ENCODE measurements at regions of chr3 and their contacts with region 1.

Region 1: GRCh38 chr3:50674349-50675178 is at the start of gene DOCK3:
- DNase-seq: peak; percentile 23 to 94 (median 59)

Region 2: DNA sequence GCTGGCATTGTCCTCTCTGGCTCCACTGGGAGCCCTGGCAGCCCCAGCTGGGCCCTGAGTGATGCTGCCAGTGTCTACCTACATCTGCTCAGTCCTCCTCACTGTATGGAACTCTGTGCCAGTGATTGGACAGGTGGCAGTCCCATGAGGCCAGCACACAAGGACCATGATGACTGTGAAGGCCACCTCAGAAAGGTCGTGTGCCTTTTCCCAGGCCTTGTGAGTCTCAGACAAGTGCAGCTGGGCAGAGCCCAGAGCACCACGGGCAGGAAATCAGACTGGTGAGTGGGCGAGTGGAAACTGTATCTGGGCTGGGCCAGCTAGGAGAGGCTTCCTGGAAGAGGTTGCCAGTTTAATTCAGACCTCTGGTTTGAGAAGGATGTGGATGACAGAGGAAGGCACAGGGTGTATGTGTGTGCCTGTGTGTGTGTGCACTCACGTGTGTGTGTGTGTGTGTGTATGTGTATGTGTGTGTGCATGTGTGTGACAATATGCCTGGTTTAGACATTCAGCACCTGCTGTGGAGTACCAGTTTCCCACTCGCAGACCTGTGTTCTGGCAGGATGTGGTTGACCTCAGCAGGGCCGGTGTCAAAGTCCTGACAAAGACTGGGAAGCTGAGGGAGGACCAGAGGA is 50.6 kb before region 1 on chr3:
- intact Hi-C with region 1: loop called (anchors 5 kb)
- DNase-seq: no peak

Region 3: DNA sequence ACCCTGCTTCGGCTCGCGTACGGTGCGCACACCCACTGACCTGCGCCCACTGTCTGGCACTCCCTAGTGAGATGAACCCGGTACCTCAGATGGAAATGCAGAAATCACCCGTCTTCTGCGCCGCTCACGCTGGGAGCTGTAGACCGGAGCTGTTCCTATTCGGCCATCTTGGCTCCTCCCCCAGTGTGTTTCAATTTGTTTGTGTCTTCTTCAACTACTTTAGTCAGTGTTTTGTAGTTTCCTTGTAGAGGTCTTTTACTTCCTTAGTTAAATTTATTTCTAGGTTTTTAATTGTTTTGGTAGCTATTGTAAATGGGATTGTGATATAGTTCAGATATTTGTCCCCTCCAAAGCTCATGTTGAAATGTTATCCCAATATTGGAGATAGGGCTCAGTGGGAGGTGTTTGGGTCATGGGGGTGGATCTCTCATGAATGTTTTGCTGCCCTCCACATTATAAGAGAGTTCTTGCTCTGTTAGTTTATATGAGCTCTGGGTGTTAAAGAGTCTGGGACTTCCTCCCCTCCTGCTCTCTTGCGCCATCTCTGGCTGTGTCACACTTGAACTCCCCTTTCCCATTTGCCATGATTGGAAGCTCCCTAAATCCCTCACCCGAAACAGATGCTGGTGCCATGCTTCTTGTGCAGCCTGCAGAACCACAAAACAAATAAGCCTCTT is 304.6 kb after region 1 on chr3:
- intact Hi-C with region 1: no loop called
- DNase-seq: no peak

Measured in posterior cingulate gyrus (tissue), 11 donors.